B cell (primary cell): ENCODE measurements at regions of chr18 and their contacts with region 1.

Region 1: DNA sequence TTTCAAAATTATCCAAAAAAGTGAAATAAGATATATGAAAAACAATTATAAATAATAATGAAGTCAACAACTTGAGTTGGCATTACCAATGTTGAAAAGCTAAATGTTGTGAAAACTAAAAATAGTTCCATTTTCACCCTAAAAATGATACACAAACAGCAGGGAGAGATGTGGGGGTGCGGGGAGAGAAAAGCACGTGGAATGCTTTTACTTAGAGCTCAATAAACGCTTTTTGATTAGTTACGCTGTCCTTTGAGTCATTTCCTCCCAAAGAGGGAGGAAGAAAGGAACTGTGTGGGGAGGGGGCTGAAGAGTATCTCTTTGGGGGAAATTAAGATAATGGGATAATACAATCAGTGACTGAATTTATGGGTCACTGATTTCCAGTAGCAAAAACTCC is 29.2 kb downstream of the ZNF521 start:
- DNase-seq: no peak
- ATAC-seq: no peak
- H3K4me3 ChIP-seq: no peak overlapping the region
- H3K4me3 Mint-ChIP-seq: no peak overlapping the region
- H3K27ac ChIP-seq: no peak overlapping the region
- H3K27ac Mint-ChIP-seq: no peak overlapping the region
- H3K4me1 ChIP-seq: no peaks in the 10 kb centered on the region
- H3K4me1 Mint-ChIP-seq: no peaks in the 10 kb centered on the region
- H3K27me3 ChIP-seq: no peaks in the 10 kb centered on the region
- H3K27me3 Mint-ChIP-seq: peaks cover 28% of the 10 kb centered on the region
- CTCF ChIP-seq: no peak

Region 2: GRCh38 chr18:25771841-25772240 is 449.0 kb after region 1 on chr18:
- CTCF ChIA-PET with region 1: no interaction called
- POLR2A ChIA-PET with region 1: no interaction called
- intact Hi-C with region 1: no loop called
- DNase-seq: no peak
- ATAC-seq: no peak
- H3K4me3 ChIP-seq: no peak overlapping the region
- H3K4me3 Mint-ChIP-seq: no peak overlapping the region
- H3K27ac ChIP-seq: no peak overlapping the region
- H3K27ac Mint-ChIP-seq: no peak overlapping the region
- H3K4me1 ChIP-seq: no peaks in the 10 kb centered on the region
- H3K4me1 Mint-ChIP-seq: no peaks in the 10 kb centered on the region
- H3K27me3 ChIP-seq: no peaks in the 10 kb centered on the region
- H3K27me3 Mint-ChIP-seq: peaks cover 8% of the 10 kb centered on the region
- CTCF ChIP-seq: no peak

Region 3: GRCh38 chr18:26342648-26343047 is 1019.8 kb after region 1 on chr18:
- CTCF ChIA-PET with region 1: no interaction called
- POLR2A ChIA-PET with region 1: interaction called, 12 read pairs
- intact Hi-C with region 1: no loop called
- DNase-seq: no peak
- ATAC-seq: no peak
- H3K4me3 ChIP-seq: no peak overlapping the region
- H3K4me3 Mint-ChIP-seq: no peak overlapping the region
- H3K27ac ChIP-seq: no peak overlapping the region
- H3K27ac Mint-ChIP-seq: no peak overlapping the region
- H3K4me1 ChIP-seq: no peaks in the 10 kb centered on the region
- H3K4me1 Mint-ChIP-seq: no peaks in the 10 kb centered on the region
- H3K27me3 ChIP-seq: no peaks in the 10 kb centered on the region
- H3K27me3 Mint-ChIP-seq: no peaks in the 10 kb centered on the region
- CTCF ChIP-seq: no peak